Posterior vena cava (tissue), 2 donors: ENCODE measurements at regions of chr16 and their contacts with region 1.

Region 1: GRCh38 chr16:86563489-86564345 is 2.9 kb upstream of the FOXC2 start:
- DNase-seq: peak; percentile 96

Region 2: GRCh38 chr16:86491256-86492023 is 72.3 kb before region 1 on chr16:
- intact Hi-C with region 1: no loop called
- DNase-seq: no peak

Region 3: GRCh38 chr16:87062569-87063442 is 499.1 kb after region 1 on chr16:
- intact Hi-C with region 1: loop called (anchors 2 kb)
- DNase-seq: peak; percentile 92

Region 4: DNA sequence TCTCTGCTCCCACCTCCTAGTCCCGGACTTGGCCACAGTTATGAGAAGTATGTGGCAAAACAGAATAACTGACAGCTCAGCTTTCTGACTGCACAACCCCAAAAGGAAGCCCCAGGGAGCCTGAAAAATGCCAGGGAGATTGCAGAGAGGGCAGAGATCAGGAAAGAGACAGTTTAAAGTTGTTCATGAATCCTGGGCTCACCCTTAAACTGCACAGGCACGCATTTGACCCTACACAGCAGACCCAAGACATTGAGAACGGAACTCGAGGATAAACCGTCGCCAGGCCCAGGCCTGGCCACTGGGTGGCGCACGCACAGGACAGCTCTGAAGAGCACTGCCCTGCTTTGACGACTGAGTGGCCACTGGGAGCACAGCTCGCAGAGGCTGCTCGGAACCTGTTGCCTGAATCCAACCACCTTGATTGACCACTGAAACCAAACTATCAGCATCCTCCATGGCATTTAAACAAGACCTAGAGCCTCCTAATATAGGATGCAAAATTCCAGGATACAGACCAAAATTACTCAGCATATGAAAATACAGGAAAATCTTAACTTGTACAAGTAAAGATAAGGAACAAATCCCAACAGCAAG is 639.4 kb after region 1 on chr16:
- intact Hi-C with region 1: loop called in 1 of 2 experiments (anchors 5 kb)
- DNase-seq: no peak